GM12878 (cell line): ENCODE measurements at regions of chr6 and their contacts with region 1.

Region 1: DNA sequence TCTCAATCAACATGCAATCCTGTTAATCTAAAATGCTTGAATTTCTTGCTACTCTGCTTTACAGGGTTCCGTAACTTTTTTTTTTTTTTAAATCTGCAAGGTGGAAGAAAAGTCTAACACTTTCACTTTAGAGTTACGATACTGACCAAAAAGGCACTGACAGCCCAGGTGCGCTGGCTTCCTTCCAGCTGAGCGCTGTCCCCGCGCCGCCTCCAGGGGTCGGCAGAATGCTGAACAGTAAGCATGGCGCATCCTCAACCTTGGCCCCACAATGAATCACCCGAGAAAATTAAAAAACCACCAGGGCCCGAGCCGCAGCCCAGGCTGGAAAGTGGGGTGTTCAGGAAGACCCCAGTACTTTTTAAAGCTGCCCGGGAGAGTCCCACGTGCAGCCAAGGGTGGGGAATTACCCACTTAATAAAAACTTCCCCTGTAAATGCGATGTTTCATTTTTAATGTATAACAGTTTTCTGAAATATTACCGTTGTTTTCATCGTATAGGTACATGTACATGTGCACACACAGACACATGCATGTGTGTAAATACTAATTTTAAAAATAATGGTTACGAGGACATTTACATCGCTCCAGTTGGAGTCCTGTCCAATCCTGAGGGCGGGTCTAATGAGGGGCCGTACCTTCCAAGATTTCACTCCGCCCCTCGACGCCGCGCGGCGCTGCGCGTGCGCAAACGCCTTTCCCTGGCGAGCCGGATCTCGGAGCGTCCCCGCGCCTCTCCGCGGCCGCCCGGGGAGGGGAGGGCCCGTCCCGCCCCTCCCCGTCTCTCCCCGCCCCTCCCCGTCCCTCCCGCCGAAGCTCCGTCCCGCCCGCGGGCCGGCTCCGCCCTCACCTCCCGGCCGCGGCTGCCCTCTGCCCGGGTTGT is at the start of gene GINM1:
- DNase-seq: peak; percentile 90
- ATAC-seq: peak; percentile 86
- H3K4me3 ChIP-seq: peak within 1 kb of the TSS; percentile 97
- H3K27ac ChIP-seq: peak within 1 kb of the TSS; percentile 94
- H3K4me1 ChIP-seq: peaks cover 13% of the 10 kb centered on the region; the same call in 1 of the 2 replicates
- H3K27me3 ChIP-seq: no peaks in the 10 kb centered on the region
- CTCF ChIP-seq: peak; percentile 85 to 91 (median 91)
- EP300 ChIP-seq: peak; percentile 57 to 62; a peak in 3 of 4 replicates
- POLR2A ChIP-seq: no peak
- RAD21 ChIP-seq: peak; percentile 75
- polyA plus RNA-seq, gene GINM1: 10.6 to 20.3 TPM

Region 2: GRCh38 chr6:149545754-149546528 is 19.8 kb before region 1 on chr6 and contains the start of gene PPIL4:
- CTCF ChIA-PET with region 1: interaction called, 20 read pairs
- POLR2A ChIA-PET with region 1: interaction called, 4 read pairs
- RAD21 ChIA-PET with region 1: interaction called, 4 read pairs
- SMC1A ChIA-PET with region 1: interaction called, 5 read pairs
- in situ Hi-C with region 1: no loop called
- intact Hi-C with region 1: no loop called
- DNase-seq: peak; percentile 71
- ATAC-seq: peak; percentile 92
- H3K4me3 ChIP-seq: peak within 1 kb of the TSS; percentile 92
- H3K27ac ChIP-seq: peak within 1 kb of the TSS; percentile 87
- H3K4me1 ChIP-seq: no peaks in the 10 kb centered on the region; the same call in 1 of the 2 replicates
- H3K27me3 ChIP-seq: no peaks in the 10 kb centered on the region; a peak in 1 of 4 replicates
- CTCF ChIP-seq: peak; percentile 74 to 89 (median 75)
- EP300 ChIP-seq: 0 out of 4 replicates have a peak, but pooled peaks of 1 of the 2 experiments have one; percentile 21
- POLR2A ChIP-seq: peak; percentile 94
- RAD21 ChIP-seq: peak; percentile 59
- polyA plus RNA-seq, gene PPIL4: 24.7 to 25.9 TPM

Region 3: GRCh38 chr6:149648148-149649145 is 82.7 kb after region 1 on chr6 and contains the start of gene KATNA1:
- CTCF ChIA-PET with region 1: interaction called, 3 read pairs
- POLR2A ChIA-PET with region 1: interaction called, 8 read pairs
- RAD21 ChIA-PET with region 1: interaction called, 8 read pairs
- SMC1A ChIA-PET with region 1: interaction called, 5 read pairs
- in situ Hi-C with region 1: no loop called
- intact Hi-C with region 1: loop called (anchors 2 kb)
- DNase-seq: peak; percentile 69
- ATAC-seq: peak; percentile 92
- H3K4me3 ChIP-seq: peak within 1 kb of the TSS; percentile 75
- H3K27ac ChIP-seq: peak within 1 kb of the TSS; percentile 74
- H3K4me1 ChIP-seq: no peaks in the 10 kb centered on the region
- H3K27me3 ChIP-seq: no peaks in the 10 kb centered on the region
- CTCF ChIP-seq: peak in 2 of 3 experiments; percentile 7 to 14; a peak in 1 of 6 replicates
- EP300 ChIP-seq: no peak
- POLR2A ChIP-seq: peak; percentile 97
- RAD21 ChIP-seq: no peak
- polyA plus RNA-seq, gene KATNA1: 15.4 to 23.1 TPM

Region 4: GRCh38 chr6:149701714-149702113 is 135.9 kb after region 1 on chr6:
- CTCF ChIA-PET with region 1: no interaction called
- POLR2A ChIA-PET with region 1: interaction called, 5 read pairs
- RAD21 ChIA-PET with region 1: no interaction called
- SMC1A ChIA-PET with region 1: no interaction called
- in situ Hi-C with region 1: no loop called
- intact Hi-C with region 1: loop called (anchors 5 kb)
- DNase-seq: no peak
- ATAC-seq: no peak
- H3K4me3 ChIP-seq: no peak overlapping the region
- H3K27ac ChIP-seq: no peak overlapping the region
- H3K4me1 ChIP-seq: no peaks in the 10 kb centered on the region
- H3K27me3 ChIP-seq: no peaks in the 10 kb centered on the region
- CTCF ChIP-seq: no peak
- EP300 ChIP-seq: no peak
- POLR2A ChIP-seq: no peak
- RAD21 ChIP-seq: no peak

Region 5: DNA sequence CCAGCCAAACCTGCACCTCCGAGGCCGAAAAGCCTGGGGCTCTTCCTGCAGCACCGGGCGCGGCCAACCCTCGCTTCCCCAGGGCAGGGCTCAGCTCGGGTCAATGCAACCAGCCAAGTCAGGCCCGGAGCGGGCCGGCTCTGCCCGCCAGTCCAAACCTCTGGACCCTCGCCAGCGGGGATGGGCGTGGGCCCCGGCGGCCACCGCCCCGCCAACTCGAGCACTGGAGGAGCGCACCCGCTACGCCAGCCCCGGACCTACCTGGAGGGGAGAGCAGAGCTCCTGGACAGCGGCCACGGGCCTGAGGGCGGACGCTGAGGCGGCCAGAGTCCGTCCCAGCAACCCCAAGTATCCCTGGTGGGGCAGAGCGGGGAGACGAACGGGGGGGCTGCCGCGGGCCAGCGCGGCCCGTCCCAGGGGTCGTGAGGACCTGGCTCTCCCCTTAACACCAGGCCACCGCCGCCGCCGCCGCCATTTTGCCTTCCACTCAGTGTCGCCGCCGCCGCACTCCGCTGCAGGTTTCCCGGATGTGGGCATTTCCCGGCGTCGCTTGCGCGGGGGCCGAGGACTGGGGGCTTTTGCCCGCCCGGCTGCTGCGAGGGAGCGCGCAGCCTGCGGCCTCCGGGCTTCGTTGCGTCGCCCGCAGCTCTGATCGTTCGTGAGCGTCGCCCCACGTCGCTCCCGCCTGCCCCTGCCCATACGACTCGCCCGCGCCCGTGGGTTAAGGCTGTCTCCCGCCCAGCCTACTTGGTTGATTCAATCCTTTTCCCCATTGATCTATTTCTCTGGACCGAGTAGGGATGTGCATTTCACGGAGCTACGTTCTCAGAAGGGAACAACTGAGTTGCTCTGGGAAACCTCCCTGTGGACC is 152.1 kb after region 1 on chr6 and contains the start of gene LATS1:
- CTCF ChIA-PET with region 1: interaction called, 4 read pairs
- POLR2A ChIA-PET with region 1: interaction called, 4 read pairs
- RAD21 ChIA-PET with region 1: interaction called, 3 read pairs
- SMC1A ChIA-PET with region 1: interaction called, 4 read pairs
- in situ Hi-C with region 1: no loop called
- intact Hi-C with region 1: loop called (anchors 5 kb)
- DNase-seq: no peak
- ATAC-seq: peak; percentile 95
- H3K4me3 ChIP-seq: peak within 1 kb of the TSS; percentile 95
- H3K27ac ChIP-seq: peak within 1 kb of the TSS; percentile 86
- H3K4me1 ChIP-seq: no peaks in the 10 kb centered on the region
- H3K27me3 ChIP-seq: no peaks in the 10 kb centered on the region
- CTCF ChIP-seq: no peak
- EP300 ChIP-seq: no peak
- POLR2A ChIP-seq: peak; percentile 98
- RAD21 ChIP-seq: no peak
- polyA plus RNA-seq, gene LATS1: 2.1 to 2.4 TPM

Region 6: DNA sequence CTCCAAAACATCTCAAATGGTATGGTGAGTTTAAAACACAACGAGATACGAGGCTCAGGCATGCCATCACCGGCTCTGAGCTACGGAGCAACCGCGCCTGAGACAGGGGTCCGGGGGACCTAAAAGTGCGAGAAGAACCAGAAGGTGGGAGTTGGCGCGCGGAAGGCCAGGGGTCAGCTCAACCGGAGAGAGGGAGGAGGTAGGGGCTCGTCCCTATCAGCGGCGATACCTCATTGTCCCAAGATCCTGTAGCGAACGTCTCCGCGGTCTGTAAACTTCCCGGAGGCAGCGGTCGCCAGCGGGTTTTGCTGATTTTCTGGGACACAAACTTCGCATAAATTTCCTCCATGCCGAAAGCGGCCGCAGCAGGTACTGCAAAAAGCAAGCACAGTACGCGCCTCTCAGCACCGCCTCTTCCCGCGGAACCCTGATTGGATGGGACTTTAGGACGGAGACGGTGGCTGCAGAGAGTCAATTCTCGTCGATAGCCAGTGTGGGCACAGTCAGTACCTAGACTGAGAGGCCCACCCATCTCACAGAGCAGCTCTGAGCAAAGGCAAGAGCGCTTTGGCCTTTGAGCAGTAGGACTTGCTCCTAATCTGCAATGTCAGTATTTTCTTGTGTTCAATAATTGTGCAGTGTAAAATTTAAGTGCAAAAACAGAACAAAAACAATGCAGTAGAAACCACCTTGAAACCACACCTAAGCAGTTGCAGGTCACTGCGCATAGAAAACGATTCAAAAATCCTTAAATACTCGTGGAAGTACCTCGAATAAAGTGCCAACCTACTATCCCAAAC is 180.6 kb after region 1 on chr6 and contains the start of gene NUP43:
- CTCF ChIA-PET with region 1: interaction called, 3 read pairs
- POLR2A ChIA-PET with region 1: no interaction called
- RAD21 ChIA-PET with region 1: no interaction called
- SMC1A ChIA-PET with region 1: no interaction called
- in situ Hi-C with region 1: no loop called
- intact Hi-C with region 1: loop called (anchors 5 kb)
- DNase-seq: peak; percentile 82
- ATAC-seq: peak; percentile 74
- H3K4me3 ChIP-seq: peak within 1 kb of the TSS; percentile 90
- H3K27ac ChIP-seq: peak within 1 kb of the TSS; percentile 75
- H3K4me1 ChIP-seq: peaks cover 5% of the 10 kb centered on the region
- H3K27me3 ChIP-seq: no peaks in the 10 kb centered on the region
- CTCF ChIP-seq: peak in 2 of 3 experiments; percentile 49 to 54; a peak in 5 of 6 replicates
- EP300 ChIP-seq: no peak
- POLR2A ChIP-seq: peak; percentile 67; the same call in 1 of the 2 replicates
- RAD21 ChIP-seq: no peak
- polyA plus RNA-seq, gene NUP43: 8.9 to 10.4 TPM